ENCODE measurements at regions of chr6 and their contacts with region 1.

Region 1: GRCh38 chr6:161242779-161243693 is 30.8 kb downstream of the AGPAT4 start:
- DNase-seq: peak; percentile 57 to 79
- H3K4me3 ChIP-seq: peak overlapping the region in 1 of 4 experiments; percentile 11; a peak in 2 of 8 replicates
- H3K27ac ChIP-seq: no peak overlapping the region
- H3K4me1 ChIP-seq: peaks cover 2 to 21% (median 7%) of the 10 kb centered on the region in 4 experiments; a peak in 5 of 7 replicates
- H3K27me3 ChIP-seq: no peaks in the 10 kb centered on the region
- CTCF ChIP-seq: peak in 2 of 3 experiments; percentile 9 to 31; a peak in 2 of 4 replicates
- EP300 ChIP-seq: no peak
- POLR2A ChIP-seq: no peak
- RAD21 ChIP-seq: peak in 1 of 2 experiments; percentile 19; a peak in 2 of 4 replicates

Region 2: DNA sequence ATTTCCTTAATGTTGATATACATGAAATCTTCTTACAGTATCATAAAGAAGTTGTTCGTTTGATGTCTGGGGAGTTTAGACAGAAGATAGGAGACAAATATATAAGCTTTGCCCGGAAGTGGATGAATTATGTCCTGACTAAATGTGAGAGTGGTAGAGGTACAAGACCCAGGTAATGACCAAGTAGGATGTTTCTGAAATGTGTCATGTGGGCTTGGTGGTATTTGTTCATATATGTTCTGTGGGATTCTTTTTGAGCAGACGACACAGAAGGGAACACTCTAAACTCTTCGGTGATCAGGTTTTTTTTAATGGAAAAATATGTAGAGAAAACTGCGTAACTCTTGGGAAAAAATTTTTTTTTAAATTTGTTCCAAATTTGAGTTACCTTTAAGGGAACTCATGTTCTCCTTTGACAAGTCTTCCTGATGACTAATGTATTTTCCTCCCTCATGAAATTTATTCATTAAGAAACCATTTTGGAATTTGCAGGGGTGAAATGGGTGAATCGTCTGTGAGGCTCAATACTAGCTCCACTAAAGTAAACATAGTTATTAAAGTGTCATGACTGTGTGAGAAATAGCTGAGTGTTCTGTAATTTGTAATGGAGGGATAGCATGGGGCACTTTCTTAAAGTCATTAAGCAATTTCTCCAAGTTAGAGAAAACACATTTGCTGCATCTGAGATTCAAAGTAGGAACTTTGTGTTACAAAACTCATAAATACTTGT is 150.9 kb before region 1 on chr6:
- CTCF ChIA-PET with region 1: no interaction called
- POLR2A ChIA-PET with region 1: no interaction called
- DNase-seq: no peak
- H3K4me3 ChIP-seq: no peak overlapping the region
- H3K27ac ChIP-seq: no peak overlapping the region
- H3K4me1 ChIP-seq: no peaks in the 10 kb centered on the region
- H3K27me3 ChIP-seq: no peaks in the 10 kb centered on the region
- CTCF ChIP-seq: no peak
- EP300 ChIP-seq: no peak
- POLR2A ChIP-seq: no peak
- RAD21 ChIP-seq: no peak

Region 3: GRCh38 chr6:161268531-161269210 is 25.6 kb after region 1 on chr6:
- CTCF ChIA-PET with region 1: interaction called, 14 read pairs
- POLR2A ChIA-PET with region 1: interaction called, 13 read pairs
- DNase-seq: peak in 1 of 2 experiments; percentile 14
- H3K4me3 ChIP-seq: no peak overlapping the region
- H3K27ac ChIP-seq: no peak overlapping the region
- H3K4me1 ChIP-seq: peaks cover 0 to 15% (median 11%) of the 10 kb centered on the region in 4 experiments; a peak in 5 of 7 replicates
- H3K27me3 ChIP-seq: no peaks in the 10 kb centered on the region
- CTCF ChIP-seq: no peak
- EP300 ChIP-seq: no peak
- POLR2A ChIP-seq: no peak
- RAD21 ChIP-seq: no peak

Region 4: DNA sequence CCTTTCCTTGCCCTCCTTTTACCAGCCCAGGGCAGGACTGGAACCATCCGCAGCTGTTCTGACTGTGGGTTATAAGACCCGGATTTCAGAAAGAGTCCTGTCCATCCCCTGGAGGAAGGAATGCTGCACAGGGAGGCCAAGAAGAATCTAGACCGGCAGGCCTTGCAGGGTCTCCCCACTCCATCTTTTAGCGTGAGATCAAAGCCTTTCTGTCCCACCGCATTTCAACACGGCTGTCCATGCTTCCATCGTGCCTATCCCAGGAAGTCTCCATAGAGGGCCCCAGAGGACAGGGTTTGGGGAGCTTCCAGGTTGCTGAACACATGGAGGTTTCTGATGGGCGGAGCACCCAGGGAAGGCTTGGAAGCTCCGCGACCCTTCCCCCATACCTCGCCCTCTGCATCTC is 110.2 kb after region 1 on chr6:
- CTCF ChIA-PET with region 1: interaction called, 12 read pairs
- POLR2A ChIA-PET with region 1: no interaction called
- DNase-seq: peak; percentile 66 to 78
- H3K4me3 ChIP-seq: no peak overlapping the region
- H3K27ac ChIP-seq: no peak overlapping the region
- H3K4me1 ChIP-seq: no peaks in the 10 kb centered on the region; a peak in 1 of 7 replicates
- H3K27me3 ChIP-seq: no peaks in the 10 kb centered on the region
- CTCF ChIP-seq: peak; percentile 55 to 78 (median 77)
- EP300 ChIP-seq: 0 out of 3 replicates have a peak, but pooled peaks of 1 of the 2 experiments have one; percentile 38
- POLR2A ChIP-seq: no peak
- RAD21 ChIP-seq: peak; percentile 81 to 91